Activated B cell treated with CpG ODN at 0.5 μM for 24 hours (primary cell): ENCODE measurements at regions of chr9 and their contacts with region 1.

Region 1: GRCh38 chr9:79757881-79758669 is 186.3 kb downstream of the TLE4 start:
- DNase-seq: no peak
- ATAC-seq: no peak
- H3K4me3 Mint-ChIP-seq: no peak overlapping the region
- H3K27ac Mint-ChIP-seq: no peak overlapping the region
- H3K4me1 Mint-ChIP-seq: no peaks in the 10 kb centered on the region
- H3K27me3 Mint-ChIP-seq: no peaks in the 10 kb centered on the region
- CTCF ChIP-seq: no peak

Region 2: DNA sequence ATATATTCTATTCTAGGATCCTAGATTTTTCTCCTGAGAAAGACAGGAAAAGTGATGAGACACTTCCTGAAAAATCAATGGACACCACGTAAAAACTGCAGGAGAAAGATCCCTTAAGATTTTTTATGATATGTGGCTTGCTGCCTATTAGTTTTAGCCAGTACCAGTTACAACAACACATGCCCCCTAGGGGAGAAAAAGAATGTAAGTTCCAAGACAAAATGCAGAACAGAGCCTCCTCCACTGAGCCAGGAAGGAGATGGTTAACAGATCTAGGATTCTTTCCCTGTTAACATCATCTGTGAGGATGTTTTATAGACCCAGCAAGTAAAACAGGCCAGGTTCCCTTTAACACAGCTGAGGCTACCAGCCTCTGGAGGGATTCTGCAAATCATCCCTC is 388.4 kb after region 1 on chr9:
- CTCF ChIA-PET with region 1: interaction called, 3 read pairs
- POLR2A ChIA-PET with region 1: no interaction called
- intact Hi-C with region 1: loop called (anchors 1 kb)
- DNase-seq: no peak
- ATAC-seq: no peak
- H3K4me3 Mint-ChIP-seq: no peak overlapping the region
- H3K27ac Mint-ChIP-seq: no peak overlapping the region
- H3K4me1 Mint-ChIP-seq: peaks cover 6% of the 10 kb centered on the region
- H3K27me3 Mint-ChIP-seq: no peaks in the 10 kb centered on the region
- CTCF ChIP-seq: no peak